MCF 10A (cell line): ENCODE measurements at regions of chr21 and their contacts with region 1.

Region 1: DNA sequence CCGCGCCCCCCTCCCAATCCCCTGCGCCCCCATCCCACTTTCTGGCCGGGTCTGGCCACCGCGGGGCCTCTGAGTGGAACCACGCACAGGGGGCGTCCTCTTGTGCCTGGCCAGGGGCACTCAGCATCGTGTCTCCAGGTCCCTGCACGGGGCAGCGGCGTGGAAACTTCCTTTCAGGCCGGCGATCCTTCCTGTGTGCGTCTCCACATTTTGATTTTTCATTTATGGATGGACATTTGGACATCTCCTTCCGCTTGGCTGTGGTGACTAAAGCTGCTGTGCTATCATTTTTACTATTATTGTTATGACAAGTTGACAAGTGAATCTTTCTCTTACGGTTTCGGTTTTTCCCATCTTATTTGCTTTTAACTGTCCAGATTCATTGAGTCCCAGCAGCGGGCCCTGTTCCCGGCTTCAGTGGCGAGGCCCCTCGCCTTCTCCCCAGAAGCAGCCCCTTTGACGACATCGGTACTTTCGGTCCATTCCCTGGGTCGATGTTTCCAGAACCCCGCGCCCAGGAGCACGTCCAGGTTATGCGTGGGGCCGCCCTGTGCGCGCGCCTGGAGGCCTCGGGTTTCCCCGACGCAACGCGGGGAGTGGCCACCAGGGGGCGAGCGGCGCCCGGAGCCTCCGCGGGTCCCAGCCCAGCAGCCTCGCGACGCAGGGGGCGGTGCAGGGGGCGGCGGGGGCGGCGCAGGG is 12.4 kb upstream of the SLC19A1 start:
- DNase-seq: peak; percentile 71
- H3K4me3 Mint-ChIP-seq: peak overlapping the region; percentile 83
- H3K27ac Mint-ChIP-seq: peak overlapping the region; percentile 43
- H3K4me1 Mint-ChIP-seq: peaks cover 19% of the 10 kb centered on the region
- H3K27me3 Mint-ChIP-seq: no peaks in the 10 kb centered on the region
- CTCF ChIP-seq: peak; percentile 79

Region 2: DNA sequence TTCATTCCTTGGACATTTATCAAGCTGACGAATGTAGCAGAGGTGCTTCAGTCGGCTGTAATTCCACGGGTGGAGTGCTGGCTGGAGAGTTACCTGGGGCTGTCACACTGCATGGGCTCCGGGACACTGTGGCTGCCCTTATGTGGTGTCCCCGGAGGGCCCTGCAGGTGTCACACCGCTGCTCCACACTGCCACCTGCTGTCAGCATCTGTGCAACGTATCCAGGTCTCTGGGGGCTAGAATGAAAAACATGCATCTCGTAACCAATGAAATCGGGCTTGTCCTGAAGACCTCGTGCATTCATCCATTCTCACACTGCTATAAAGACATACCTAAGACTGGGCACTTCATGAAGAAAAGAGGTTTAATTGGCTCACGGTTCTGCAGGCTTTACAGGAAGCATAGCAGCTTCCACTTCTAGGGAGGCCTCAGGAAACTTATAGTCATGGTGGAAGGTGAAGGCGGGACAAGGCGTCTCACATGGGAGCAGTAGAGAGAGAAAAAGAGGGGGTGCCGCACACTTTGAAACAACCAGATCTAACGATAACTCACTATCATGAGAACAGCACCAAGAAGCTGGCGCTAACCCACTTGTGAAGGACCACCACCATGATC is 42.2 kb after region 1 on chr21:
- CTCF ChIA-PET with region 1: interaction called, 9 read pairs
- POLR2A ChIA-PET with region 1: no interaction called
- intact Hi-C with region 1: loop called (anchors 1 kb)
- DNase-seq: peak; percentile 69
- H3K4me3 Mint-ChIP-seq: no peak overlapping the region
- H3K27ac Mint-ChIP-seq: no peak overlapping the region
- H3K4me1 Mint-ChIP-seq: no peaks in the 10 kb centered on the region
- H3K27me3 Mint-ChIP-seq: peaks cover 45% of the 10 kb centered on the region
- CTCF ChIP-seq: peak; percentile 92

Region 3: DNA sequence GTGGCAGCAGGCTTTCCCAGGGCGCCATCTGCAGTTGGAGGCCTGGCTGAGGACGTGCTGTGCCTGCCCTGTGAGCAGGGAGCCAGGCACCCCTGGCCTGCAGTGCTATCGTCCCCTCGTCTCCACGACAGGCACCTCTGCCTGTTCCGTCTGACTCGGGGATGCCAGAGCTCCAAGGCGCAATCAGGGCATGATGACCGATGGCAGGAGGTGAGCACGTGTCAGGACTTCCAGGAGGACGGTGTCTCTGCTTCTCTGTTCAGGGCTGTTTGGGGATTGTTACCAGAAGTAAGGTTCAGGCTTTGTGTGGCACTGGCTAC is 214.1 kb after region 1 on chr21:
- CTCF ChIA-PET with region 1: interaction called, 3 read pairs
- POLR2A ChIA-PET with region 1: no interaction called
- intact Hi-C with region 1: loop called (anchors 1 kb)
- DNase-seq: peak; percentile 18
- H3K4me3 Mint-ChIP-seq: no peak overlapping the region
- H3K27ac Mint-ChIP-seq: no peak overlapping the region
- H3K4me1 Mint-ChIP-seq: no peaks in the 10 kb centered on the region
- H3K27me3 Mint-ChIP-seq: peaks cover 12% of the 10 kb centered on the region
- CTCF ChIP-seq: no peak

Region 4: GRCh38 chr21:45880097-45881068 is 325.8 kb after region 1 on chr21:
- CTCF ChIA-PET with region 1: no interaction called
- POLR2A ChIA-PET with region 1: no interaction called
- intact Hi-C with region 1: loop called (anchors 5 kb)
- DNase-seq: peak; percentile 93
- H3K4me3 Mint-ChIP-seq: peak overlapping the region; percentile 18
- H3K27ac Mint-ChIP-seq: peak overlapping the region; percentile 67
- H3K4me1 Mint-ChIP-seq: peaks cover 9% of the 10 kb centered on the region
- H3K27me3 Mint-ChIP-seq: no peaks in the 10 kb centered on the region
- CTCF ChIP-seq: peak; percentile 49